ENCODE measurements at regions of chr10 and their contacts with region 1.

Region 1: DNA sequence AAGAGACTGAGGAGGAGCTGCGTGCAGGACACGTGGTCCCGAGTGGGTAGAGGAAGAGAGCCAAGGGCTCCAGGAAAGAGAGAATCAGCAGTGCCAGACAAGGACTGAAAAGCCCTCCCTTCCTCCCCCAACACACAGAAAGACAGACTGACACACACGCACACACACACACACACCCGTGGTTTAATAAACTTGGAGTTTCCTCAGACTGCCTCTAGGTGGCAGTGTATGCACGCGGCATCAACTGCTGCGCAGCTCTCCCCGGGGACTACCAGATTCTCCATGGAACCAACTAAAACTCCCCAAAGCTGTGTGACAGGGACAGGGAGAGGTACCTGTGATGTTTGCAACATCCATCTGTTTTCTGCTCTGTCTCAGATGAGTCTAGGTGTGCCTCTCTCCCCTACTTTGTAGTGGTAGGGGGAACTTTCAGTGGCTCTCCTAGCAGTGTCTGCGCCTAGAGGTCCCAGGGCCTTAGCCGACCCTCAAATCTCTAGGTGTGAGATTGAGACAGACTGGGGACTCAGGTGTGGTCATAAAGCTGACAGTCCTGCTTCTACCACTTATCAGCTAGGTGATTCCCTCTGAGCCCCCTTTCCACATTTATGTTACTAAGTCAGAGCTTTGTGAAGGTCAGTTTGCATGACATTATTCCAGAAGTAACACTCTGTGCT is 9.3 kb upstream of the TSPAN14 start:
- DNase-seq: peak; percentile 66
- H3K4me3 Mint-ChIP-seq: no peak overlapping the region
- H3K27ac Mint-ChIP-seq: no peak overlapping the region
- H3K4me1 Mint-ChIP-seq: peaks cover 10% of the 10 kb centered on the region
- H3K27me3 Mint-ChIP-seq: no peaks in the 10 kb centered on the region
- CTCF ChIP-seq: peak; percentile 77

Region 2: GRCh38 chr10:80289451-80290287 is 155.1 kb before region 1 on chr10 and contains the start of gene MAT1A:
- CTCF ChIA-PET with region 1: no interaction called
- POLR2A ChIA-PET with region 1: no interaction called
- intact Hi-C with region 1: no loop called
- DNase-seq: peak; percentile 72
- H3K4me3 Mint-ChIP-seq: peak within 1 kb of the TSS; percentile 4
- H3K27ac Mint-ChIP-seq: peak within 1 kb of the TSS; percentile 1
- H3K4me1 Mint-ChIP-seq: peaks cover 17% of the 10 kb centered on the region
- H3K27me3 Mint-ChIP-seq: no peaks in the 10 kb centered on the region
- CTCF ChIP-seq: no peak
- total RNA-seq, gene MAT1A: 0.26 TPM in 1 of 2 replicates, not detected in the other

Region 3: DNA sequence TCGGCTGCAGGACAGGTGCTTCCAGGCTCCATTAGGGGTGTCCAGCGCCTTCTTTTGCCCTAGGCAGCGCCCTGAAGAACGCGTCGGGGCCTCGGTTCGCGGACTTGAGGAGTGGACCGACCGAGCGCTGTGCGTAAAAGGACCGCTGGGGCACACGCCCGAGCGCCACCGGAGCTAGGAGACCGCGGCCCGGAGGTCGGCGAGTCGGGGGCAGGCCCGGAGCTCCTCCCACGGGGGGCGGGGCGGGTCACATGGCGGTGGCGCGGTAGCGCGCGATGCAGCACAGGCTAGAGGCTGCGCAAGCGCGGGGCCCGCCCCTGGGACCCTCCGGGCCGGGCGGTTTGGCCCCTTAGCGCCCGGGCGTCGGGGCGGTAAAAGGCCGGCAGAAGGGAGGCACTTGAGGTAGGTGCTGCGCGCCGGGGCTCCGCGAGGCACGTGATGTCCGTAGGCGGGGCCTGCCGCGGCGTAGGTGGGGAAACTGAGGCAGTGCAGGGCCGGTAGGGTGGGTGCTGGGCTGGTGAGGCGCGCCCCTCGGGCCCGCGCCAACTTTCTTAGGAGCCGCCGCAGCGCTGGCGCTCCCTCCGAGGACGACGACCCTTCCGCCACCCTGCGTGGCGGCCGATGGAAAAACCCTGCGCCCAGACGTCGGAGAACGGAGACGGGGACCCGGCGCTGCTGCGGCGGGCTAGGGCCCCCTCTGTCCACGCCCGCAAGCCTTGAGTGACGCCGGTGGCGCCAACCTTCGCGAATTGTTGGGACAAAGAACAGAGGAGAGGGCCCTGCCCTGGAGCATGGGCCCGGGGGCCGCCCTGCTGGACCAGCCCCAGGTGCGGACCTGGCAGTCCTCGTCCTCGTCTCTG is 36.3 kb before region 1 on chr10 and contains the start of gene PRXL2A:
- CTCF ChIA-PET with region 1: interaction called, 24 read pairs
- POLR2A ChIA-PET with region 1: no interaction called
- intact Hi-C with region 1: no loop called
- DNase-seq: peak; percentile 45
- H3K4me3 Mint-ChIP-seq: peak within 1 kb of the TSS; percentile 69
- H3K27ac Mint-ChIP-seq: no peak within 1 kb of the TSS
- H3K4me1 Mint-ChIP-seq: peaks cover 32% of the 10 kb centered on the region
- H3K27me3 Mint-ChIP-seq: no peaks in the 10 kb centered on the region
- CTCF ChIP-seq: no peak
- total RNA-seq, gene PRXL2A: 6.0 and 6.7 TPM in 2 replicates

Region 4: DNA sequence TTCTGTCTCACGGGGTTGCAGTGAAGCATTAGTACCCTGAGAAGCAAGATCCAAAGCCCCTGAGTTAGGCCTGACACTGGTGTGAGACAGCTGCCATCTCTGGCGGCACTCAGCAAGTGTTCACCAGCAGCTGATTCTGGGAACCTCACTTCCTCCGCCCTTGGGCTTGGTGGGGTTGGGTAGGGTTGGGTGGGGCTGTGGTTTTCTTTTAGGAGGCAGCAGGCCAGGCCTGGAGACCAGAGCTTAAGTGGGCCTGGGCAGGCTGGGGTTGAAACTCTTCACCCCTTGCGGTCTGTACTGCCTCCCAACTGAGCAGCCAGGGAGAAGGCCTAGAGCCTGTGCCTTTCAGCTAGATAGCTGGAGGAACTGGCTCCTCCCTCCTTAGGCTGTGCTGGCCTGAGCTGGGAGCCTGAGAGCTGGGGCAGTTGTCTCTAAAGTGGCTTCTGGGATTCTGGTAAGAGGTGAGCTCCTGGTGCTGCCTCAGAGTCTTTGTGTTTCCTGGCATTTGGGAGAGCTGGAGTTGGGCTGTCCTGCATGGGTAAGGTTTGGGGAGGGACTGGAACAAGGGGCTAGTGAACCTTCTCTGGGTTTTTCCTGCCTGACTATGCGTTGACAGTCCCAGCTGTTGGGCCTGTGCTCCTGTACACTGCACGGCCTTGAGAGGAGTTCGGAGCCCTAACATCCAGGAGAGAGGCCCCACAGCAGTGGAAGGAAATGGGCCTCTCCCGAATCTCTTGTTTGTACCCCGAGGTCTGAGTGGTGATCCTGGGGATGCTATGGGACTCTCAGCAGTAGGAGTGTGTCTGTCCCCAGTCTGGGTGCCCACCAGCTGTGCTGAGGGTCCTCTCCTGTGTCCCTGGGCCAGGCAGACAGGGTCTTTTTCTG is 14.5 kb after region 1 on chr10:
- CTCF ChIA-PET with region 1: interaction called, 27 read pairs
- POLR2A ChIA-PET with region 1: interaction called, 3 read pairs
- intact Hi-C with region 1: no loop called
- DNase-seq: peak; percentile 88
- H3K4me3 Mint-ChIP-seq: peak overlapping the region; percentile 58
- H3K27ac Mint-ChIP-seq: peak overlapping the region; percentile 89
- H3K4me1 Mint-ChIP-seq: peaks cover 65% of the 10 kb centered on the region
- H3K27me3 Mint-ChIP-seq: no peaks in the 10 kb centered on the region
- CTCF ChIP-seq: no peak

Region 5: DNA sequence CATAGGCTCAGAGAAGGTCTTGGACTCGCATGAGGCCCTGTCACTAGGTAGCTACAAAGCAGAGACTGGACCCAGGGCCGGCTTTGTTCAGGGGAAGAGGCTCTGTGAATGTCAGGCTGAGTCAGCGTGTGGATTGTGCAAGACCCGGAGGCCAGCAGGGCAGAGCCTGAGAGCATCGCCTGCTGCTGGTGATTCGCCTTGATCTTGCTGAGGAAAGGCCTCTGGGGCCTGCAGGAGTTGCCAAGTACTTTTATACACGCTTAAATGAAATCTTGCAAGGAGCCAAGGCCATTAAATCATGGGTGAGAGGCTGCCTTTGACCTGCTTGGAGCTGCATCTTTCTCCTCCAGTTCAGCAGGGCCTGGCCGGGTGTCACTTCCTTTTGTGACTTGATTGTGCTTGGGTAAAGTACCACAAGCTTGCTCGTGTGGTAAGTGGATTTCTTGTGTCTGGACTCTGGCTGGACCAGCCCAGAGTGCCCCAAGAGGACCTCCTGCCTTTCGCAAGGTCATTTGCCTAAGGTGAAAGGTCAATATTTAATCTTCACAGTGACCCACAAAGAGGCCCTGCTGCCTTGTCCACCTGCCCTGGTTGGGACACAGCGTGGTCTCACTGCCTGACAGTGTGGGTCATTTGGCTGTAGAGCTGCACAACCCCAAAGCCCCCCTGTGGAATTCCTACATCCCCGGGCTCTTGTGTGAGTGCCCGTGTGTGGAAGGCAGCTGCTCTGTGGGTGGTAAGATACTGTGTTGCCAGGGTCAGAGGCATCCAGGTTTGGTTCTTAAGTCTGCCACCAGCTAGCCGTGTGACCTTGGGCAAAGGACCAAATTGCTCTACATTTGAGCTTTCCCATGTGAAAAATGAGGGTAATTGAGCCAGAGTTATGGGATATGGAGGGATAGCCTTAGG is 54.3 kb after region 1 on chr10:
- CTCF ChIA-PET with region 1: interaction called, 923 read pairs
- POLR2A ChIA-PET with region 1: interaction called, 8 read pairs
- intact Hi-C with region 1: no loop called
- DNase-seq: peak; percentile 99
- H3K4me3 Mint-ChIP-seq: peak overlapping the region; percentile 45
- H3K27ac Mint-ChIP-seq: peak overlapping the region; percentile 37
- H3K4me1 Mint-ChIP-seq: peaks cover 83% of the 10 kb centered on the region
- H3K27me3 Mint-ChIP-seq: no peaks in the 10 kb centered on the region
- CTCF ChIP-seq: no peak

Region 6: DNA sequence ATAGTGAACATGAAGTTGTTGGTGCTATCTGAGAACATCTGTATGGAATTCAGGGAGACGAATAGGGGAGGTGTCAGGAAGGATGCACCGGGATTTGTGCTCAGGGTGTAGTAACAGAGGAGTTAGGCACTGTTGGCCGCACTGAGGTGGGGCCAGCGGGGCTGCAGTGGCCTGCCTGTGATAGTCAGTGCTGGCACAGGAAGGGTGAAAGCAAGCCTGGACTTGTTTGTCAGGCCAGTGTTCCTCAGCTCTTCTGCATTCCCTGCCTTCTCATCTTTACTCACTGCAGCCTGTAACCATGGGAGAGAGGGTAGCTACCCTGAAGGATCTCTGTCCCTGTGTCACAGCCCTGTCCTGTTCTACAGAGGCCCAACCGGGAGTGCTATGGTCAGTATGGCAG is 174.3 kb after region 1 on chr10:
- CTCF ChIA-PET with region 1: interaction called, 11 read pairs
- POLR2A ChIA-PET with region 1: no interaction called
- intact Hi-C with region 1: no loop called
- DNase-seq: peak; percentile 70
- H3K4me3 Mint-ChIP-seq: no peak overlapping the region
- H3K27ac Mint-ChIP-seq: peak overlapping the region; percentile 75
- H3K4me1 Mint-ChIP-seq: peaks cover 23% of the 10 kb centered on the region
- H3K27me3 Mint-ChIP-seq: no peaks in the 10 kb centered on the region
- CTCF ChIP-seq: no peak

Region 7: DNA sequence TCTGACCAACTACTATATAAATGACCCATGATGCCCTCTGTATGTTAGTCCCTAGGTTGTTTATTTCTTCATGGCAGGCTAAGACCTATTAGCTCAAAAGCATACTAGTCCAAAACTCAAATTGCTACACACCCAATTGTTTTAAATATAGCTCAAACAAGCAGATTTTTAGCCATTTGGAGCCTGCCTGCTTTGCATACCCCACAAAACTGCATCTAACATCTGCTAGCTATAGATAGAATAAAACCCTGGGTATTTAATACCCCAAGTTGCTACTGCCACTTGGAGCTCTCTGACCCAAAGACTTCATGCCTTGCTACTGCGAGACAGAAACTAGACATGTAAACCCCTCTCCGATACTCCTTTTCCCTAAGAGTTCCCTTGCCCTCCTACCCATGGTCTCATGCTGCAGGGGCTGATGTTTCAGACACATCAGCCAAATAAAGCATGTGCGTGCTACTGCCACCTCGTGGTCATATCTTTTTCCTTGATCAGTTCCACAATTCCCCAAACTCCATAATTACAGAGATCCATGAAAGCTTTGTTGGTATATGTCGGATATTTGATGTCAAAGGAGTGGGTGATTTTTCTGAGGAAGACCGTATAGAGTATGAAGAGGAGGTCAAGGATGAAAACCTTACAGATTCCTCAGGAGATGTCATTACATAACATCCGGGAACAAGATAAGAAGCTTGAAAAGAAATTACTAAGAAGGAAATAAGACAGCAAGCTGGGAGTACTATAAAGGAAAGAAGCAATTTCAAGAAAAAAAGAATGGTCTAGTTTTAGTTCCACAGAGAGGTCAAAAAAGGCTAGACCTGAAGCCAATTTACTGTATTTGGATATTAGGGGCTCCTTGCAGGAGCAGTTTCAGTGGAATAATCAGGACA is 479.5 kb after region 1 on chr10:
- CTCF ChIA-PET with region 1: interaction called, 42 read pairs
- POLR2A ChIA-PET with region 1: interaction called, 6 read pairs
- intact Hi-C with region 1: loop called (anchors 1 kb)
- DNase-seq: peak; percentile 64
- H3K4me3 Mint-ChIP-seq: no peak overlapping the region
- H3K27ac Mint-ChIP-seq: no peak overlapping the region
- H3K4me1 Mint-ChIP-seq: no peaks in the 10 kb centered on the region
- H3K27me3 Mint-ChIP-seq: peaks cover 48% of the 10 kb centered on the region
- CTCF ChIP-seq: peak; percentile 56